ENCODE measurements at regions of chr17 and their contacts with region 1.

Region 1: GRCh38 chr17:1379930-1380313 is 20.1 kb downstream of the YWHAE start:
- DNase-seq: peak; percentile 52
- CTCF ChIP-seq: no peak

Region 2: GRCh38 chr17:1340371-1340770 is 39.6 kb before region 1 on chr17:
- CTCF ChIA-PET with region 1: no interaction called
- POLR2A ChIA-PET with region 1: no interaction called
- DNase-seq: no peak
- CTCF ChIP-seq: no peak

Region 3: GRCh38 chr17:1399679-1400512 is 20.0 kb after region 1 on chr17 and contains the start of gene YWHAE:
- CTCF ChIA-PET with region 1: interaction called, 9 read pairs
- POLR2A ChIA-PET with region 1: interaction called, 15 read pairs
- DNase-seq: peak; percentile 96
- CTCF ChIP-seq: no peak

Region 4: DNA sequence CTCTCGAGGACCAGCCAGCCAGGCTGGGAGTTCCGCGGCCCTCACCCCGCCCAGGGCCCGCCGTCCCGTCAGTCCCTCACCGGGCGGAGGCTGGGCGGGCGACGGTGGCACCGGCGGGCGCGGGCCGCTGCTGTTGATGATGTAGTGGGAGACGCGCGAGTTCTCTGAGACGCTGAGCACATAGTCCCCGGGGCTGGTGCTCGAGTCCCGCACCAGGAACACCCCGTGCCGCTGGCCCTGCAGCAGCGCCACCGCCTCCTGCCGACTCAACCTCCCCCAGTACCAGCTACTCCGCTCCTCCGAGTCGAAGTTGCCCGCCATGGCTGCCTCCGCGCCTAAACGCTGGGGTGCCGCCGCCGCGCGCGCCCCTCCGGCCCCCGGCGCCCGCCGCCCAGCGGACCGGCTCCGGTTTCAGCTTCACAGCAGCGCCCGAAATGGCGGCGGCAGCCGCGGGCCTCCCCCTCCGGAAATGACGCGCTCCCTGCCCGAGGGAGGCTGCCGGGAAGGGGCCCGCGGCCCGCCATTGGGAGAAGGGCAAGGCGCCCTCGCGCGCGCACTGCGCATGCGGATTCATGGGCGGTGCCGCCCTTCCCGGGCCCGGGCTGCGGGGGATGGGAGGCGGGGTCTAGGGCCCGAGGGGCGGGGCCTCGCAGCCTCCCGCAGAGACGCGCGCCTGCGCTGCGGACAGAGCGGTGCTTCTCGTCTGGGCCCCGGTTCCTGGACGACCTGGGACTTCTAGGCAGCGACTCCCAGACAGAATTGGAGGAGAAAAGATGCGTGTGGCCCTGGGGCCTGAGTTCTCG is 76.1 kb after region 1 on chr17 and contains the start of gene CRK:
- CTCF ChIA-PET with region 1: no interaction called
- POLR2A ChIA-PET with region 1: no interaction called
- DNase-seq: peak; percentile 100
- CTCF ChIP-seq: no peak

Measured in GM10248 (cell line).